ENCODE measurements at regions of chr6 and their contacts with region 1.

Region 1: GRCh38 chr6:135438907-135439535 is 58.5 kb downstream of the AHI1 start:
- DNase-seq: peak; percentile 17
- ATAC-seq: peak; percentile 83
- H3K4me3 ChIP-seq: no peak overlapping the region
- H3K27ac ChIP-seq: no peak overlapping the region
- H3K4me1 ChIP-seq: peaks cover 11% of the 10 kb centered on the region
- H3K27me3 ChIP-seq: no peaks in the 10 kb centered on the region
- CTCF ChIP-seq: peak; percentile 55 to 66 (median 58)
- EP300 ChIP-seq: no peak
- POLR2A ChIP-seq: no peak
- RAD21 ChIP-seq: peak; percentile 74

Region 2: GRCh38 chr6:133952815-133953633 is 1486.0 kb before region 1 on chr6 and contains the start of gene TBPL1:
- CTCF ChIA-PET with region 1: no interaction called
- POLR2A ChIA-PET with region 1: no interaction called
- RAD21 ChIA-PET with region 1: no interaction called
- SMC1A ChIA-PET with region 1: no interaction called
- in situ Hi-C with region 1: loop called (anchors 25 kb)
- intact Hi-C with region 1: no loop called
- DNase-seq: peak; percentile 90
- ATAC-seq: peak; percentile 88
- H3K4me3 ChIP-seq: peak within 1 kb of the TSS; percentile 88
- H3K27ac ChIP-seq: peak within 1 kb of the TSS; percentile 74
- H3K4me1 ChIP-seq: peaks cover 11% of the 10 kb centered on the region
- H3K27me3 ChIP-seq: no peaks in the 10 kb centered on the region
- CTCF ChIP-seq: no peak
- EP300 ChIP-seq: peak in 1 of 2 experiments; percentile 62; a peak in 1 of 4 replicates
- POLR2A ChIP-seq: peak; percentile 94
- RAD21 ChIP-seq: no peak
- polyA plus RNA-seq, gene TBPL1: 34.9 to 52.5 TPM

Region 3: DNA sequence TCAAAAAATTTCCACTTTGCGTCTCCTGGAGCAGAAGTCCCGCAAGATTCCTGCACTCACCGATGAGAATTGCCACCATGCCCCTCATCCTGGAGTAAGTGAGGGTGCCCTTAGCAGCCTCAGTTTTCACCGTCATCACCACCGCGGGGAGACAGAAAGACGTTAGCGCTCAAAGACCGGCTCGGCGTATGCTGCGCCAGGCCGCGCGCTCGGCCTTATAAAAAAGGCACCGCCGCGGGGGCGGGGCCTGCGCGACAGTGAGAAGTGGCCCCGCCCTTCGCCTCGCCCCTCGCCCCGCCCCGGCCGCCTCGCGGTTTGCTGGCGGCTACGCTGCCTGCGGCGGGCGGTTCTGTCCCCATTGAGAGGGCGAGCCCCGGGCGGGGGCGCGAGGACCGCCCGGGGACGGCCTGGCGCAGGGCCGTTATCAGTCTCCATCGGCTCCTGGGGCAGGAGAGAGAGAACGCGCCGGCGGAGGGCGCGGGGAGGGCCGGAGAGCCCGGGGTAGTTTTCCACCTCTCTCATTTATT is 1264.3 kb before region 1 on chr6:
- CTCF ChIA-PET with region 1: interaction called, 3 read pairs
- POLR2A ChIA-PET with region 1: no interaction called
- RAD21 ChIA-PET with region 1: interaction called, 3 read pairs
- SMC1A ChIA-PET with region 1: no interaction called
- in situ Hi-C with region 1: no loop called
- intact Hi-C with region 1: loop called (anchors 5 kb)
- DNase-seq: peak; percentile 50
- ATAC-seq: peak; percentile 96
- H3K4me3 ChIP-seq: peak overlapping the region; percentile 82
- H3K27ac ChIP-seq: no peak overlapping the region
- H3K4me1 ChIP-seq: peaks cover 5% of the 10 kb centered on the region
- H3K27me3 ChIP-seq: peaks cover 2 to 9% of the 10 kb centered on the region in 2 experiments
- CTCF ChIP-seq: peak in 1 of 3 experiments; percentile 34; a peak in 3 of 6 replicates
- EP300 ChIP-seq: no peak
- POLR2A ChIP-seq: peak; percentile 99
- RAD21 ChIP-seq: peak; percentile 38; the same call in 1 of the 2 replicates

Region 4: DNA sequence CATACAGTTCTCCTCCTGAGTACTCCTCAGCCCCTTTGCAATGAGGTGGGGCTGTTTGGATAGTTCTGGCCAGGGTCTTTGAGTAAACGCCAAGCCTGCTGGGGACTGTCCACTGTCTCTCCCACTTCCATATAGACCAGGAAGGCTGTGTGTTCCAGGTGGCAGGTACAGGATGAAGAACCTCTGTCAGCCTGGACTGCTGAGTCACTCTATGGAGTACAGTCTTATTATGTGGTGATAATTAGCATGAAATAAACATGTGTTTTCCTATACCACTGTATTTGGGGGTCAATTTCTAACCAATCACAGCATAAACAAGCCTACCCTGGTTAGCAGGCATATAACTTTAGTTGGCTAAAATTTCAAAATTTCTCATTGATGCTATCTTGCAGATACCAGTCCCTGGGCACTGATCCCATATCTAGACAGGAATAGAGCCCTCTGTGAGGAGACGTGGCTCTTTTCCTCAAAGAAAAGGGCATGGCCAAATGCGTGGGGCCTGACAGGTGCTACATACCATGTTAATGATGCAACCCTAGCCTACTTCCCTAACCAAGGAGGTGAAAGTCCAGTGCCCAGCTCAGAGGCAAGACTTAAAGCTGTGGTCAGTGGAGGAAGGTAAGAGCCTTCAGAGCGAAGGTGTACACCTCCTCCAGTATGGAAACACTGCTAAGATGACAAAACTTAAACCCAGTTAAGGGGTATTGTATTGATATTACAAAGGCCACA is 484.6 kb before region 1 on chr6:
- CTCF ChIA-PET with region 1: no interaction called
- POLR2A ChIA-PET with region 1: no interaction called
- RAD21 ChIA-PET with region 1: no interaction called
- SMC1A ChIA-PET with region 1: no interaction called
- in situ Hi-C with region 1: no loop called
- intact Hi-C with region 1: loop called (anchors 10 kb)
- DNase-seq: no peak
- ATAC-seq: no peak; the same call in 2 of the 3 replicates
- H3K4me3 ChIP-seq: no peak overlapping the region
- H3K27ac ChIP-seq: no peak overlapping the region
- H3K4me1 ChIP-seq: no peaks in the 10 kb centered on the region
- H3K27me3 ChIP-seq: no peaks in the 10 kb centered on the region
- CTCF ChIP-seq: no peak
- EP300 ChIP-seq: no peak
- POLR2A ChIP-seq: no peak
- RAD21 ChIP-seq: no peak

Region 5: DNA sequence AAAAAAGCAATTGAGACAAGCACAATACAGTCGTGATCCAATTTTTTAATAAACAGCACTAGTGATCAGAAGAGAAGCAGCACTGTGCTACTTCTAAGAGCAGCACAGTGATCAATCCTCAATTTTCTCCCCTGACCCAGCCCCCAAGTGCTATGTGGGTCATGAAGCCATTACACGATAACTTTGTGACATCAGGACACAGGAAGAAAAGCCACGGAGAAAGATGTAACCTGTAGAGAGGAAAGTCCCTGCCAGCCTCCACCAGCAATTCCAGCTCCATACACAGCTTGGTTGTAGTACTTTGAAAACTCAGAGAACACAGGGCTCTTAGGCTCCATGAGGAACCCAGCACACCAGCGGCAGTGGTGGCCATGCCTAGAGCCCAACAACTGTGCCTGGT is 303.2 kb before region 1 on chr6:
- CTCF ChIA-PET with region 1: no interaction called
- POLR2A ChIA-PET with region 1: no interaction called
- RAD21 ChIA-PET with region 1: interaction called, 3 read pairs
- SMC1A ChIA-PET with region 1: no interaction called
- in situ Hi-C with region 1: loop called (anchors 5 kb)
- intact Hi-C with region 1: no loop called
- DNase-seq: no peak
- ATAC-seq: no peak; the same call in 2 of the 3 replicates
- H3K4me3 ChIP-seq: no peak overlapping the region
- H3K27ac ChIP-seq: no peak overlapping the region
- H3K4me1 ChIP-seq: no peaks in the 10 kb centered on the region; the same call in 1 of the 2 replicates
- H3K27me3 ChIP-seq: no peaks in the 10 kb centered on the region
- CTCF ChIP-seq: no peak
- EP300 ChIP-seq: no peak
- POLR2A ChIP-seq: no peak
- RAD21 ChIP-seq: no peak

Region 6: GRCh38 chr6:135451693-135452092 is 12.7 kb after region 1 on chr6:
- CTCF ChIA-PET with region 1: interaction called, 31 read pairs
- POLR2A ChIA-PET with region 1: no interaction called
- RAD21 ChIA-PET with region 1: interaction called, 6 read pairs
- SMC1A ChIA-PET with region 1: interaction called, 12 read pairs
- in situ Hi-C with region 1: no loop called
- intact Hi-C with region 1: no loop called
- DNase-seq: no peak
- ATAC-seq: peak; percentile 34; the same call in 2 of the 3 replicates
- H3K4me3 ChIP-seq: no peak overlapping the region
- H3K27ac ChIP-seq: no peak overlapping the region
- H3K4me1 ChIP-seq: no peaks in the 10 kb centered on the region; the same call in 1 of the 2 replicates
- H3K27me3 ChIP-seq: no peaks in the 10 kb centered on the region
- CTCF ChIP-seq: peak; percentile 49 to 67 (median 58)
- EP300 ChIP-seq: no peak
- POLR2A ChIP-seq: no peak
- RAD21 ChIP-seq: peak; percentile 77